ENCODE measurements at regions of chr6 and their contacts with region 1.

Region 1: GRCh38 chr6:11711003-11711983 is 67.3 kb downstream of the ADTRP start:
- DNase-seq: peak in 8 of 9 donors; percentile 22 to 79 (median 38)
- ATAC-seq: peak; percentile 28
- H3K4me3 ChIP-seq: peak overlapping the region; percentile 13
- H3K4me3 Mint-ChIP-seq: peak overlapping the region; percentile 71 to 86 (median 75)
- H3K27ac ChIP-seq: peak overlapping the region; percentile 67
- H3K27ac Mint-ChIP-seq: peak overlapping the region; percentile 90 to 100 (median 97)
- H3K4me1 ChIP-seq: peaks cover 16 to 84% of the 10 kb centered on the region in 2 donors
- H3K4me1 Mint-ChIP-seq: peaks cover 55 to 92% (median 89%) of the 10 kb centered on the region in 7 donors
- H3K27me3 ChIP-seq: no peaks in the 10 kb centered on the region
- H3K27me3 Mint-ChIP-seq: no peaks in the 10 kb centered on the region

Region 2: DNA sequence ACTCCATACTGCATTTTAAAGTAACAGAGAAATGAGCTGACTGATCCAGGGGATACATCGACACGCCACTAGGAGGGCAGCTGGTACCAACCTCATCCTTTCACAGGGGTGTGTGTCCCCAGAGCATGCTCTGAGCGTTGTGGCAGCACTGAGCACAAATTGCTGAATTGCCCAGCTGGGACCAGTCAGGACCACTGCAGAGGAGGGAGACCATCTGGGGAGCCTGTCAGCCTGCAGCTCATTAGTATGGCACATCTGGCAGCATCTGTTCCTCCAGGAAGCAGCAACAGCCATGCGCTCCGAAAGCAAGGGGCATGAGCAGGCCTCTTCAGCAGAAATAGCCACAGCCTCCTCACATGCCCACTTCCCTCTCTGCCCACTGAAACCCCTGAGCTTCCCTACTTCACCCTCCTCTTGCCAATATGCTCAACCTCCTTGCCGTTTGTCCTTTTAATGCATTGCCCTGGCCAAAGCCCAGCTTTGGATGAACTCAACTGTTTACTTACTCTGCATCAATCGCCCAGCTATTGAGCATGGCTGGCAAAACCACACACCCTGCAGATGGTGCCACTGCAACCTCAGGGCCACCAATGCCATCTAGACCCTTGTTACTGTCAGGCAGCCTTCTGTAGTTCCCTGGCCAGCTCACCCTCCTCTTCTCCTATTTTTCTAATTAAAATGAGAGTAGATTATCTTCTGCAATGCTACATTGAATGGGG is 401.2 kb before region 1 on chr6:
- CTCF ChIA-PET with region 1: no interaction called
- POLR2A ChIA-PET with region 1: no interaction called
- intact Hi-C with region 1: no loop called
- DNase-seq: no peak
- ATAC-seq: peak; percentile 29
- H3K4me3 ChIP-seq: no peak overlapping the region
- H3K4me3 Mint-ChIP-seq: no peak overlapping the region
- H3K27ac ChIP-seq: no peak overlapping the region
- H3K27ac Mint-ChIP-seq: no peak overlapping the region
- H3K4me1 ChIP-seq: no peaks in the 10 kb centered on the region
- H3K4me1 Mint-ChIP-seq: peaks cover 4 to 25% (median 14%) of the 10 kb centered on the region in 7 donors
- H3K27me3 ChIP-seq: no peaks in the 10 kb centered on the region
- H3K27me3 Mint-ChIP-seq: no peaks in the 10 kb centered on the region

Region 3: DNA sequence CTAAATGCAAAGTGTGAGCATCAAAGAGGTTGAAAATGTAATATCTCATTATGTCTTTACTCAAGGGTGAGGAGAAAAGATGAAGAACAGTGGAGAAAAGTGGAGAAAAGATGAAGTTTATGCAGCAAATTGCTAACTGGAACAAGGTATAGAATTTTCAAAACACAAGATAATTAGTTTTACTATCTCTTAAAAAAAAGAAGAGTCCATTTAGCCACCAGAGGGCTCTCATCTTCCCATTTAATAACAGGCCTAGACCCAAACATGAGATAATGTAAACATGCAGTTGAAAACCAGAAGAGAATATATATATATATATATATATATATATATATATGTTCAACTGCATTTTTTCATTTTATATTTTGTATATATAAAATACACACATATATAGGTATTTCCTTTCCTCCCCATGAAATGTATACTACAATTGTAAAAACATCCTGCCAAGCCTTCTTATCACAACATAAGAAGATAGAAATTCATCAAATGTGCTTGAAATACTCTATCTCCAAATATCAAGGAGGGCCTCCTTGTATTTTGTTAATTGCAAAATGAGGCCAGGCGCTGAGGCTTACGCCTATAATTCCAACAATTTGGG is 11.1 kb before region 1 on chr6:
- CTCF ChIA-PET with region 1: interaction called, 7 read pairs
- POLR2A ChIA-PET with region 1: interaction called, 15 read pairs
- intact Hi-C with region 1: loop called in 1 of 2 experiments (anchors 1 kb)
- DNase-seq: peak in 7 of 9 donors; percentile 22 to 63 (median 51)
- ATAC-seq: peak; percentile 60
- H3K4me3 ChIP-seq: no peak overlapping the region
- H3K4me3 Mint-ChIP-seq: no peak overlapping the region
- H3K27ac ChIP-seq: no peak overlapping the region
- H3K27ac Mint-ChIP-seq: peak overlapping the region in 3 of 9 donors; percentile 21 to 66 (median 41)
- H3K4me1 ChIP-seq: peaks cover 0 to 9% of the 10 kb centered on the region in 2 donors
- H3K4me1 Mint-ChIP-seq: peaks cover 10 to 42% (median 35%) of the 10 kb centered on the region in 7 donors
- H3K27me3 ChIP-seq: no peaks in the 10 kb centered on the region
- H3K27me3 Mint-ChIP-seq: no peaks in the 10 kb centered on the region

Region 4: DNA sequence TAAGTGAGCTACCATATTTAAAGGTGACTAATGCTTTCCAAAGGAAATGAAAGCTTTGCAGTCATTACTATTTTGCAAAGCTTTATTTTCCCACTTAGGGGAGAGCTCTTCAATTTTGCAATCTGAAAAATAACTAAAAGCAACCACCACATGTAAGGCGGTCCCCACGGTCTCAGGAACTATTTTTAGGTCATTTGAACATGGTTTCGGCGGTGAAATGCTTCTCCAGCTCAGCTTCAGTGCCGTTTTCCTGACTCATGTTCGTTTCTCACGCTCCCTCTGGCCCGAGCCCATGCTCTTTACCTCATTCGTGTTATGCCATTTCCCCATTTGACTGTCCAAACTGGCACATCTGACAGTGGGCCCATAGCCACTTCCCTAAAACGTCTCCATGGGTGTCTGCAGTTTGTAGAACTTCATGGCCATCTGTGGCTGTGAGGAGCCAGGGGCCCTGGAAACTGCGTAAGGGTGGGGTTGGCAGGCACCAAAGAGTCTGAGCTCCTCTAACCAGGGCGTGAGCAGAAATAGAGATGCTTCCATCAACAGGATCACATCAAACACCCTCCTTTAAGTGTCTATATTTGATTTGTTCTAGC is 20.8 kb after region 1 on chr6:
- CTCF ChIA-PET with region 1: interaction called, 21 read pairs
- POLR2A ChIA-PET with region 1: interaction called, 126 read pairs
- intact Hi-C with region 1: loop called (anchors 1 kb)
- DNase-seq: peak in 1 of 9 donors; percentile 61
- ATAC-seq: peak; percentile 67
- H3K4me3 ChIP-seq: peak overlapping the region; percentile 11
- H3K4me3 Mint-ChIP-seq: peak overlapping the region; percentile 37 to 79 (median 64)
- H3K27ac ChIP-seq: no peak overlapping the region
- H3K27ac Mint-ChIP-seq: peak overlapping the region; percentile 39 to 96 (median 75)
- H3K4me1 ChIP-seq: peaks cover 0 to 52% of the 10 kb centered on the region in 2 donors
- H3K4me1 Mint-ChIP-seq: peaks cover 32 to 67% (median 60%) of the 10 kb centered on the region in 7 donors
- H3K27me3 ChIP-seq: no peaks in the 10 kb centered on the region
- H3K27me3 Mint-ChIP-seq: peaks cover 0 to 15% (median 0%) of the 10 kb centered on the region in 5 donors

Region 5: DNA sequence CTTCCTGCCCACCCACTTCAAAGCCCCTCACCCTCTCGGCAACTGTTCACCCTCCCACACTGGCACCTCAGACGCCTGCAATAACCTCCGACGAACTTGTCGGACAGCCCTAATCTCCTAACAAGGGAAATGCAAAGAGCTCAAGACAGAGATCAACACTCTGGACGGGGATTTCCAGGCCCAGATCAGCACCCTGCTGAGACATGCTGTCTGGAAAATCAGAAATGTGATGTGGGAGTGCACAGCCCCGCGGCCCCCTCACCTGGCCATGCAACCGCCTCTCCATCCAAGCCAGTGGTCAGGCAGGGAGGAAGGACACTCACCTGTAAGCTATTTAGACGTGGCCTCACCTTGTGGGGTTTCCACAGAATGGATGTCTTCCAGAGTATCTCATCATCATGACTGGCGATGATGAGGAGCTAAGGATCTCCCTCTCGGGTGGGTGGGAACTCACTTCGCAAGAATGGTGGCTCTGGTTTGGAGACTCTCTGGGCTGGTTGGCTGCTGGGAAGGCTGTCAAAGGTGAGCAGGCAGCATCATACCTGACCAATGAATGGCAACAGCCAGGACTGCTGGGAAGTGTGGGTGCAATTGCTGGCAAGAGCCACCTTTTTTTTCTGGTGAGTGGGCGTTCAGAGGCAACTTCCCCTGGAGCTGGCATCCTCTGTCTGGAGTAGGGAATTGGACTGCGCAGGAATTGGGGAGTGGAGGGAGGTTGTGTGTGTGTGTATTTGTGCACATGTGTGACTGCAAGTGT is 95.4 kb after region 1 on chr6:
- CTCF ChIA-PET with region 1: no interaction called
- POLR2A ChIA-PET with region 1: no interaction called
- intact Hi-C with region 1: loop called in 1 of 2 experiments (anchors 5 kb)
- DNase-seq: peak in 2 of 9 donors; percentile 3 to 22
- ATAC-seq: peak; percentile 44
- H3K4me3 ChIP-seq: no peak overlapping the region
- H3K4me3 Mint-ChIP-seq: peak overlapping the region in 7 of 10 donors; percentile 28 to 72 (median 42)
- H3K27ac ChIP-seq: no peak overlapping the region
- H3K27ac Mint-ChIP-seq: peak overlapping the region in 7 of 9 donors; percentile 25 to 84 (median 50)
- H3K4me1 ChIP-seq: peaks cover 0 to 6% of the 10 kb centered on the region in 2 donors
- H3K4me1 Mint-ChIP-seq: peaks cover 13 to 27% (median 17%) of the 10 kb centered on the region in 7 donors
- H3K27me3 ChIP-seq: no peaks in the 10 kb centered on the region
- H3K27me3 Mint-ChIP-seq: no peaks in the 10 kb centered on the region

Region 6: DNA sequence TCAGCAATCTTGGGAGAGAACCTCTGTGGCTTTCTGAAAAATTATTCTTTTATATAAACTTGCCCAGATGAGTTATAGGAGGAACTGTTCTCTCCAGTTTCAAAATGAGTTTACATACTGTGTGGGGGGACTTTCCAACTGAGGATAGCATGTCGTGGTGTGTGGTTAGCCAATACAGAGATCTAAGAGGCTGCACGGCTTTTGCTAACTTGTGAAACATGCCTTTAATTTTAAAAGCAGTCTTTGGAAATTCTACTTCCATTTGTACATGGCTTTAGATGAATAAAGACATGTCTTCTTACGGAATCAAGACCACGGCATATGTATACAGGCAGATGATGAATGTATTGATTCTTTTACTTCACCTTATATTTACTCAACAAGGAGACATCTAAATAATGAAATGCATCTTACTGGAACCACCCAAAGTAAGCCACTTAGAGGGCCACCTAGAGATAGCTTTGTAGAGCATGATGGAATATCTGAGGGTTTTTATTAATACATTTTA is 340.6 kb after region 1 on chr6:
- CTCF ChIA-PET with region 1: no interaction called
- POLR2A ChIA-PET with region 1: interaction called, 4 read pairs
- intact Hi-C with region 1: loop called (anchors 5 kb)
- DNase-seq: peak in 8 of 9 donors; percentile 46 to 83 (median 75)
- ATAC-seq: peak; percentile 98
- H3K4me3 ChIP-seq: peak overlapping the region; percentile 15
- H3K4me3 Mint-ChIP-seq: peak overlapping the region; percentile 8 to 85 (median 74)
- H3K27ac ChIP-seq: peak overlapping the region; percentile 59
- H3K27ac Mint-ChIP-seq: peak overlapping the region; percentile 70 to 93 (median 88)
- H3K4me1 ChIP-seq: peaks cover 10 to 17% of the 10 kb centered on the region in 2 donors
- H3K4me1 Mint-ChIP-seq: peaks cover 34 to 81% (median 76%) of the 10 kb centered on the region in 7 donors
- H3K27me3 ChIP-seq: no peaks in the 10 kb centered on the region
- H3K27me3 Mint-ChIP-seq: no peaks in the 10 kb centered on the region